ENCODE measurements at regions of chr13 and their contacts with region 1.

Region 1: DNA sequence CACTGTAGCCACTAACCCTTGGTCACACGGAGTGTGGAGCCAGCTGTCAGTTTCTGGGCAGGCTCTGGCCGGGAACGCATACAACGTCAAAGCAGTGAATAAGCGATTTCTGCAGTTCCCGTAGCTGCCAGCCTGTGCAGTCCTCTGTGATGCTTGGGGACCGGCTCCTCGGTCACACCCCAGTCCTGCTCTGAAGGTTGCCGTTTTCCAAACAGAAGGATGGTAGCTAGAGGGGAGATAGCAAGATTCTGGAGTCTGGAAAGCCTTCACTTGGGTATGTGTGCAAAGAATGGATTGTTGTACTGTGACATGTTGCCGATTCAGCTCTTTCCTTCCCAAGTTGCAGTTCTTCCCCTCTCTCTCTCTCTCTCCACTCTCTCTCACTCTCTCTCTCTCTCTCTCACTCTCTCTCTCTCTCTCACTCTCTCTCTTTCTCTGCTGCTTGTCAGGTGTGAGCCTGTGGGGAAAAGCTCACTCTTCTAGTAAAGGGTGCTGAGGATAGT is 38.7 kb upstream of the C1QTNF9 start:
- DNase-seq: peak in 12 of 14 experiments; percentile 42 to 85 (median 57)
- ATAC-seq: peak; percentile 36
- H3K4me3 ChIP-seq: peak overlapping the region; percentile 62
- H3K4me3 Mint-ChIP-seq: peak overlapping the region; percentile 88
- H3K27ac ChIP-seq: peak overlapping the region; percentile 92 to 99
- H3K27ac Mint-ChIP-seq: peak overlapping the region; percentile 97
- H3K4me1 ChIP-seq: peaks cover 87% of the 10 kb centered on the region
- H3K4me1 Mint-ChIP-seq: peaks cover 95% of the 10 kb centered on the region
- H3K27me3 ChIP-seq: no peaks in the 10 kb centered on the region
- H3K27me3 Mint-ChIP-seq: peaks cover 5% of the 10 kb centered on the region
- CTCF ChIP-seq: no peak

Region 2: GRCh38 chr13:23510979-23511735 is 759.5 kb before region 1 on chr13:
- CTCF ChIA-PET with region 1: no interaction called
- POLR2A ChIA-PET with region 1: no interaction called
- intact Hi-C with region 1: no loop called
- DNase-seq: peak in 3 of 14 experiments; percentile 1 to 18 (median 12)
- ATAC-seq: no peak
- H3K4me3 ChIP-seq: no peak overlapping the region
- H3K4me3 Mint-ChIP-seq: no peak overlapping the region
- H3K27ac ChIP-seq: no peak overlapping the region
- H3K27ac Mint-ChIP-seq: no peak overlapping the region
- H3K4me1 ChIP-seq: no peaks in the 10 kb centered on the region
- H3K4me1 Mint-ChIP-seq: no peaks in the 10 kb centered on the region
- H3K27me3 ChIP-seq: peaks cover 4 to 10% of the 10 kb centered on the region in 2 experiments
- H3K27me3 Mint-ChIP-seq: peaks cover 48% of the 10 kb centered on the region
- CTCF ChIP-seq: no peak

Region 3: DNA sequence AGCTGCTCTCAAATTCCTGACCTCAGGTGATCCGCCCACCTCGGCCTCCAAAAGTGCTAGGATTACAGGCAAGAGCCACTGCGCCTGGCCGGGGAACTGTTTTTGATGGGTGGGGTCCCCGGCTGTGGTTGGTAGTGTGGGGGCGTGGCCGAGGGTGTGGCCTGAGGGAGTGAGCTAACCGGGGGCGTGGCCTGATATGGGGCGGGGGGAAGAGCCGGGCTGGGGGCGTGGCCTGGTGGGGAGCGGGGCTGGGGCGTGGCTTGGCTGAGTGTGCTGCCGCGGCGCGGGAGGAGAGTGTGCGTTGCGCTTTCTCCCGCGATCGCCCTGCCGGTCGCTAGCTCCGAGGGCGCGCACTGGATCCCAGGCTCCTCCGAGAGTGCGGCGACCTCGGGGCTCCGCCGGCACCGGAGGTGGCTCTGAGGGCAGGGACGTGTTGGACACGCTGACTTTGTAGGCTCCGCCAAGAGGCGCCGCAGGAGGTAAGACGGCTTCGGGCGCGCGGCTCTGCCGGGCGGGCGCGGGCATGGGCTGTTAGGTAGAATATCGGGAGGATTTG is 110.2 kb before region 1 on chr13 and contains the start of gene SPATA13:
- CTCF ChIA-PET with region 1: no interaction called
- POLR2A ChIA-PET with region 1: no interaction called
- intact Hi-C with region 1: loop called in 1 of 2 experiments (anchors 5 kb)
- DNase-seq: peak; percentile 89 to 99 (median 94)
- ATAC-seq: peak; percentile 92
- H3K4me3 ChIP-seq: peak within 1 kb of the TSS; percentile 81
- H3K4me3 Mint-ChIP-seq: peak within 1 kb of the TSS; percentile 90
- H3K27ac ChIP-seq: no peak within 1 kb of the TSS
- H3K27ac Mint-ChIP-seq: peak within 1 kb of the TSS; percentile 74
- H3K4me1 ChIP-seq: peaks cover 18% of the 10 kb centered on the region
- H3K4me1 Mint-ChIP-seq: peaks cover 14% of the 10 kb centered on the region
- H3K27me3 ChIP-seq: no peaks in the 10 kb centered on the region
- H3K27me3 Mint-ChIP-seq: no peaks in the 10 kb centered on the region
- CTCF ChIP-seq: no peak
- total RNA-seq, gene SPATA13: 87.7 to 94.6 TPM

Region 4: DNA sequence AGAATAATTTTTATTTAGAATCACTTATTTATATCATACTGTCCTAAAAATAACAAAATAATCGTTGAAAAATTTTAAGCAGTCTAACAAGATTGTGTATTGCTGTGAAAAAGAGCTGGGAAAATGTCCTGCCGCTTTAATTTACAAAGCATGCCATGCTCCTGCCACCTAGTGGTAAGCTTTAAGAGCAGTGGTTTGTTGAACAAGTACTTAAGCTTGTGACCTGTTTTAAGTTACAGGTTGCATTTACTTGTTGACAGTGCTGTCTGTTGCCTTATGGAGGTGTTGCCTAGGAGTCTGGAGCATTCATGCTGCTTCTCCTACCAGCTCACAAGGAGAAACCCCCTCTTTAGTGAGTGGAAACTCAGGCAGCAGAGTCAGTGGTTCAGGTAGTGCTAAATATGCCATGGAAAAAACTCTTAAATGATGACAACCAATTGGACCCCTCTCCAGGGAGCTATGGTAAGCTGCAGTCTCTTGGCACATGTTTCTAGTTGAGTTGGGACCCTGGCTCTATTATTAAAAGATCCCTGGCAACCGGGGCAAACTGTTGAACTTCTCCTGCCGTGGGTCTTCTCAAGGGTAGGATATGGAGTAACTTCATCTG is 41.7 kb before region 1 on chr13:
- CTCF ChIA-PET with region 1: interaction called, 11 read pairs
- POLR2A ChIA-PET with region 1: interaction called, 13 read pairs
- intact Hi-C with region 1: no loop called
- DNase-seq: peak in 7 of 14 experiments; percentile 8 to 79 (median 54)
- ATAC-seq: peak; percentile 77
- H3K4me3 ChIP-seq: no peak overlapping the region
- H3K4me3 Mint-ChIP-seq: no peak overlapping the region
- H3K27ac ChIP-seq: no peak overlapping the region
- H3K27ac Mint-ChIP-seq: no peak overlapping the region
- H3K4me1 ChIP-seq: peaks cover 18% of the 10 kb centered on the region
- H3K4me1 Mint-ChIP-seq: peaks cover 27% of the 10 kb centered on the region
- H3K27me3 ChIP-seq: no peaks in the 10 kb centered on the region
- H3K27me3 Mint-ChIP-seq: no peaks in the 10 kb centered on the region
- CTCF ChIP-seq: peak; percentile 93

Region 5: GRCh38 chr13:24254146-24254841 is 16.4 kb before region 1 on chr13:
- CTCF ChIA-PET with region 1: interaction called, 21 read pairs
- POLR2A ChIA-PET with region 1: interaction called, 596 read pairs
- intact Hi-C with region 1: loop called (anchors 1 kb)
- DNase-seq: peak; percentile 46 to 92 (median 64)
- ATAC-seq: peak; percentile 66
- H3K4me3 ChIP-seq: peak overlapping the region; percentile 78
- H3K4me3 Mint-ChIP-seq: peak overlapping the region; percentile 94
- H3K27ac ChIP-seq: peak overlapping the region; percentile 89 to 92
- H3K27ac Mint-ChIP-seq: peak overlapping the region; percentile 92
- H3K4me1 ChIP-seq: peaks cover 76% of the 10 kb centered on the region
- H3K4me1 Mint-ChIP-seq: peaks cover 91% of the 10 kb centered on the region
- H3K27me3 ChIP-seq: no peaks in the 10 kb centered on the region
- H3K27me3 Mint-ChIP-seq: no peaks in the 10 kb centered on the region
- CTCF ChIP-seq: no peak

Region 6: GRCh38 chr13:24280720-24281119 is 10.0 kb after region 1 on chr13:
- CTCF ChIA-PET with region 1: interaction called, 4 read pairs
- POLR2A ChIA-PET with region 1: interaction called, 33 read pairs
- intact Hi-C with region 1: no loop called
- DNase-seq: peak in 2 of 14 experiments; percentile 31 to 58
- ATAC-seq: no peak
- H3K4me3 ChIP-seq: no peak overlapping the region
- H3K4me3 Mint-ChIP-seq: no peak overlapping the region
- H3K27ac ChIP-seq: no peak overlapping the region
- H3K27ac Mint-ChIP-seq: peak overlapping the region; percentile 97
- H3K4me1 ChIP-seq: peaks cover 67% of the 10 kb centered on the region
- H3K4me1 Mint-ChIP-seq: peaks cover 81% of the 10 kb centered on the region
- H3K27me3 ChIP-seq: no peaks in the 10 kb centered on the region
- H3K27me3 Mint-ChIP-seq: no peaks in the 10 kb centered on the region
- CTCF ChIP-seq: no peak

Region 7: GRCh38 chr13:25286969-25287961 is 1016.6 kb after region 1 on chr13 and contains the start of gene MTMR6:
- CTCF ChIA-PET with region 1: no interaction called
- POLR2A ChIA-PET with region 1: no interaction called
- intact Hi-C with region 1: loop called in 1 of 2 experiments (anchors 10 kb)
- DNase-seq: peak; percentile 89 to 98 (median 93)
- ATAC-seq: peak; percentile 84
- H3K4me3 ChIP-seq: peak within 1 kb of the TSS; percentile 94
- H3K4me3 Mint-ChIP-seq: peak within 1 kb of the TSS; percentile 99
- H3K27ac ChIP-seq: peak within 1 kb of the TSS; percentile 97 to 99
- H3K27ac Mint-ChIP-seq: peak within 1 kb of the TSS; percentile 97
- H3K4me1 ChIP-seq: peaks cover 22% of the 10 kb centered on the region
- H3K4me1 Mint-ChIP-seq: peaks cover 40% of the 10 kb centered on the region
- H3K27me3 ChIP-seq: no peaks in the 10 kb centered on the region
- H3K27me3 Mint-ChIP-seq: peaks cover 4% of the 10 kb centered on the region
- CTCF ChIP-seq: peak; percentile 99
- total RNA-seq, gene MTMR6: 33.3 to 34.2 TPM